Common myeloid progenitor, CD34-positive (primary cell): ENCODE measurements at regions of chr11 and their contacts with region 1.

Region 1: DNA sequence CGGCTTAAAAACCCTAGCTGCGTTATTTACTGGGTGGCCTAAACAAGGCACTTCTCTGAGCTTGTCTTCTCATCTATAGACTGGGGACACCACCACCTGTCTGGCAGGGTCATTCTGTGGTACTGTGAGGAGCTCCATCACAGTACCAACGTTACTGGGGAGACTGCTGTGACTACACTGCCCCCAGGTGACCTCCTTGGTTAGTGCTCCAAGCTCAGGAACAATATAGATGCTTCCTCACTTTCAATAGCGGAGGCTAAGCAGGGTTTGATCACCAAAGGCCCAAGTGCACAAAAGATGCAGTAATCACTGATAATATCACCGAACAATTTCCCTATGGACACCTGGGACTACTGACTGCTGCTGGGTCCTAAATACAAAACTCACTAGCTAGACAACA is 18.8 kb downstream of the PRPF19 start:
- DNase-seq: peak; percentile 70 to 84 (median 81)
- H3K4me3 ChIP-seq: no peak overlapping the region
- H3K27ac ChIP-seq: no peak overlapping the region
- H3K4me1 ChIP-seq: peaks cover 0 to 31% (median 18%) of the 10 kb centered on the region in 4 experiments
- H3K27me3 ChIP-seq: no peaks in the 10 kb centered on the region

Region 2: DNA sequence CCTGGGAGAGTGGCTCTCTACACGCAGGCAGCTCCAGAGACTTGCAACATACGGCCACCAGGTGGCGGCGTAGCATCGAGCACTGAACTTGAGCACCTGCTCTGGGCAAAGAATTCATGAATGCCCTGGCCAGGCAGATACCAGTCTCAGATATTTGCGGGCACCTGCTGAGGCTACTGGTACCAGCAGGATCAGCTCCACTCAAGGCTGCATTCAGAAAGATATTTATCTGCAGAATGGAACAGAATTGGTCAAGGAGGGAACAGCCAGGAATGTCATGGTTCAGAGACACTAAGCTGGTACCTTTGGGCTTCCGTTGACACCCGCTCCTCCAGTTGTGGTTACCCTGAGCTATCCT is 56.4 kb before region 1 on chr11:
- CTCF ChIA-PET with region 1: interaction called, 422 read pairs
- POLR2A ChIA-PET with region 1: interaction called, 7 read pairs
- DNase-seq: peak; percentile 79 to 89 (median 83)
- H3K4me3 ChIP-seq: peak overlapping the region in 1 of 7 experiments; percentile 25
- H3K27ac ChIP-seq: no peak overlapping the region
- H3K4me1 ChIP-seq: no peaks in the 10 kb centered on the region
- H3K27me3 ChIP-seq: peaks cover 0 to 4% (median 0%) of the 10 kb centered on the region in 5 experiments

Region 3: GRCh38 chr11:60848714-60849151 is 38.8 kb before region 1 on chr11:
- CTCF ChIA-PET with region 1: interaction called, 17 read pairs
- POLR2A ChIA-PET with region 1: no interaction called
- DNase-seq: peak in 1 of 3 donors; percentile 30
- H3K4me3 ChIP-seq: no peak overlapping the region
- H3K27ac ChIP-seq: peak overlapping the region in 1 of 2 experiments; percentile 50
- H3K4me1 ChIP-seq: peaks cover 6 to 33% (median 30%) of the 10 kb centered on the region in 4 experiments
- H3K27me3 ChIP-seq: no peaks in the 10 kb centered on the region

Region 4: GRCh38 chr11:60872961-60873524 is 14.5 kb before region 1 on chr11:
- CTCF ChIA-PET with region 1: interaction called, 27 read pairs
- POLR2A ChIA-PET with region 1: no interaction called
- DNase-seq: no peak
- H3K4me3 ChIP-seq: no peak overlapping the region
- H3K27ac ChIP-seq: no peak overlapping the region
- H3K4me1 ChIP-seq: peaks cover 1 to 21% (median 14%) of the 10 kb centered on the region in 4 experiments
- H3K27me3 ChIP-seq: no peaks in the 10 kb centered on the region

Region 5: GRCh38 chr11:60906132-60906972 is 18.8 kb after region 1 on chr11 and contains the start of gene PRPF19:
- CTCF ChIA-PET with region 1: interaction called, 102 read pairs
- POLR2A ChIA-PET with region 1: interaction called, 3 read pairs
- DNase-seq: peak; percentile 96 to 99 (median 98)
- H3K4me3 ChIP-seq: peak within 1 kb of the TSS; percentile 75 to 92 (median 86)
- H3K27ac ChIP-seq: peak within 1 kb of the TSS; percentile 78 to 89
- H3K4me1 ChIP-seq: peaks cover 13 to 35% (median 28%) of the 10 kb centered on the region in 4 experiments
- H3K27me3 ChIP-seq: no peaks in the 10 kb centered on the region

Region 6: GRCh38 chr11:60957188-60957587 is 69.6 kb after region 1 on chr11:
- CTCF ChIA-PET with region 1: no interaction called
- POLR2A ChIA-PET with region 1: no interaction called
- DNase-seq: no peak
- H3K4me3 ChIP-seq: no peak overlapping the region
- H3K27ac ChIP-seq: no peak overlapping the region
- H3K4me1 ChIP-seq: peaks cover 3 to 10% (median 6%) of the 10 kb centered on the region in 4 experiments
- H3K27me3 ChIP-seq: peaks cover 0 to 72% (median 27%) of the 10 kb centered on the region in 5 experiments

Region 7: DNA sequence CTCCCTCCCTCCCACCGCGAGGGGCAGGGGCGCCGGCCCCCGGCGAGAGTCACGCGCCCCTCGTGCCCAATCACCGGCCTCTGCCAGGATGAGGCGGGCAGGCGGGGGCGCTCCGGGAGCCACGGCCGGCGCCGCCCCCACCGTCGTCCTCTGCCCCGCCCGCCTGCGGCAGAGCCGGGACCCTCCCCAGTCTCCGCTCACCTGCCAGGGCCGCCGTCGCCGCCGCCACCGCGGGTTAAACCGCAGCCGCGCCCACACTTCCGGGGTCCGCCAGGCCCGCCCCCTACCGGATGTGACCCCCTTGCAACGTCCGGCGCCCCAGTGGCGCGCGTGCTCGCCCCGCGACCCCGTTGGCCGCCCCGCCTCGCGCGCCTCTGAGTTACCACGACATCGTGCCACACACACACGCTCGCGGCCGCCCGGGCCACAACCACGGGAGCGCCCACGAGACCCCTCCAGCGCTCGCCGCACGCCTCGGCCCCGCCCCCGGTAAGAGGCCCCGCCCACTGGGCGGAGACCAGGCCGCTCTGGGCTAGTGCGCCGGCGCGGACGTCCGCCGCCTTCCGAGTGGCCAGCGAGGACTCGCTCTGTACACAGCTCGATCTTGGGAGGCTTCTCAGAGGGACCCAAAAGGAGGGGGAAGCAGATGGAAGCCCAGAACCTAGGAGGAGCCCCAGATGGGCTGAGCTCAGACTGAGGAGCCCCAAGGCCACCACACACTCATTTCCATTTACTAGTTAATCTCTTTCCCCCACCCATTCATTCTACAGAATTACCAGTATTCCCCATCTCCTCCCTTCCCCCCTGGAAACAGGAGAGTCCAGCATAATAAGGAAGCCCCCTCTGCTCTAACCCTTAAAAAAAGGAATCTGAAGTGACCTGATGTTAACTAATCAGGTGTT is 273.9 kb after region 1 on chr11 and contains the start of gene VPS37C:
- CTCF ChIA-PET with region 1: no interaction called
- POLR2A ChIA-PET with region 1: no interaction called
- DNase-seq: peak; percentile 94 to 97 (median 96)
- H3K4me3 ChIP-seq: peak within 1 kb of the TSS; percentile 56 to 80 (median 75)
- H3K27ac ChIP-seq: peak within 1 kb of the TSS; percentile 77 to 89
- H3K4me1 ChIP-seq: peaks cover 13 to 35% (median 24%) of the 10 kb centered on the region in 4 experiments
- H3K27me3 ChIP-seq: no peaks in the 10 kb centered on the region